ENCODE measurements at regions of chr3 and their contacts with region 1.

Region 1: GRCh38 chr3:32309654-32310242 is 71.3 kb downstream of the CMTM8 start:
- DNase-seq: no peak
- ATAC-seq: no peak
- H3K4me3 ChIP-seq: no peak overlapping the region
- H3K4me3 Mint-ChIP-seq: no peak overlapping the region
- H3K27ac ChIP-seq: no peak overlapping the region
- H3K27ac Mint-ChIP-seq: peak overlapping the region in 1 of 2 donors; percentile 11
- H3K4me1 ChIP-seq: peaks cover 3 to 22% of the 10 kb centered on the region in 2 experiments
- H3K4me1 Mint-ChIP-seq: peaks cover 50 to 60% (median 58%) of the 10 kb centered on the region in 3 donors
- H3K27me3 ChIP-seq: no peaks in the 10 kb centered on the region
- H3K27me3 Mint-ChIP-seq: no peaks in the 10 kb centered on the region

Region 2: DNA sequence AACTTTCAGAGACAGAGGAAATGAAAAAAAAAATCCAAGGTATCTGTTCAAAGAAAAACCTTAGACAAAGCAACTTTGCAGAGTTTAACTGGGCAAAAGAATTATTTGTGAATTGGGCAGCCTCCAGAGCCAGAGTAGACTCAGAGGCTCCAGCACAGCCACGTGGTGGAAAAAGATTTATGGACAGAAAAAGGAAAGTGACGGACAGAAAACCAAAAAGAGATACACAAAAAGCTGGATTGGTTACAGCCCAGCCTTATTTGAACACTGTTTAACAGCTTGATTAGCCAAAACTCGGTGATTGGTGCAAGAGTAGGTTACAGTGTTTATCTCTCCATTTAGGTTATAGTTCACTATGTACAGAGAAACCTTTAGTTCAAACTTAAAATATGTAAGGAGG is 227.0 kb before region 1 on chr3:
- CTCF ChIA-PET with region 1: no interaction called
- POLR2A ChIA-PET with region 1: interaction called in 1 of 2 experiments, 10 read pairs
- DNase-seq: no peak
- ATAC-seq: no peak
- H3K4me3 ChIP-seq: no peak overlapping the region
- H3K4me3 Mint-ChIP-seq: no peak overlapping the region
- H3K27ac ChIP-seq: no peak overlapping the region
- H3K27ac Mint-ChIP-seq: no peak overlapping the region
- H3K4me1 ChIP-seq: no peaks in the 10 kb centered on the region
- H3K4me1 Mint-ChIP-seq: no peaks in the 10 kb centered on the region
- H3K27me3 ChIP-seq: no peaks in the 10 kb centered on the region
- H3K27me3 Mint-ChIP-seq: peaks cover 0 to 6% of the 10 kb centered on the region in 2 donors

Region 3: GRCh38 chr3:32184187-32184730 is 125.5 kb before region 1 on chr3:
- CTCF ChIA-PET with region 1: interaction called in 1 of 2 experiments, 13 read pairs
- POLR2A ChIA-PET with region 1: no interaction called
- DNase-seq: no peak
- ATAC-seq: no peak
- H3K4me3 ChIP-seq: no peak overlapping the region
- H3K4me3 Mint-ChIP-seq: no peak overlapping the region
- H3K27ac ChIP-seq: no peak overlapping the region
- H3K27ac Mint-ChIP-seq: no peak overlapping the region
- H3K4me1 ChIP-seq: no peaks in the 10 kb centered on the region
- H3K4me1 Mint-ChIP-seq: no peaks in the 10 kb centered on the region
- H3K27me3 ChIP-seq: peaks cover 0 to 5% of the 10 kb centered on the region in 2 experiments
- H3K27me3 Mint-ChIP-seq: peaks cover 10 to 11% of the 10 kb centered on the region in 2 donors

Region 4: DNA sequence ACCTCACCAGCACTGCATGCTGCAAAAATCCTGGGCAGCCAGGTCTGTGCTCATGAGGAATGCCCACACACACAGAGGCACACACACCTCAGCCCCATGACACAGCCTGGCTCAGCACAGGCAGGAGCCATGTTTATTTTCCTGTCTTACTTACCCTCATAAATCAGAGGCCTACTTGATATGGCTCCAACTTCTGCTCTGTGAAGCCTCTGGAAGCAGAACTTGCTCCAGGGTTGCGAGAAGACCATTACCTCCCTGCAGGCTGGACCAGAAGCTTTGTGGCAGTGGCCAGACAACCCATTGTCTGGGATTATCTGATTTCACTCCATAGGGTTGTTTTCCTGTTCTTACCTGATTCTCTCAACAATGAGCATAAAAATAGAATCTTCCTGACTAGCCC is 115.1 kb before region 1 on chr3:
- CTCF ChIA-PET with region 1: no interaction called
- POLR2A ChIA-PET with region 1: no interaction called
- DNase-seq: no peak
- ATAC-seq: no peak
- H3K4me3 ChIP-seq: no peak overlapping the region
- H3K4me3 Mint-ChIP-seq: no peak overlapping the region
- H3K27ac ChIP-seq: no peak overlapping the region
- H3K27ac Mint-ChIP-seq: no peak overlapping the region
- H3K4me1 ChIP-seq: no peaks in the 10 kb centered on the region
- H3K4me1 Mint-ChIP-seq: no peaks in the 10 kb centered on the region
- H3K27me3 ChIP-seq: peaks cover 0 to 12% of the 10 kb centered on the region in 2 experiments
- H3K27me3 Mint-ChIP-seq: peaks cover 10% of the 10 kb centered on the region in 2 donors

Region 5: DNA sequence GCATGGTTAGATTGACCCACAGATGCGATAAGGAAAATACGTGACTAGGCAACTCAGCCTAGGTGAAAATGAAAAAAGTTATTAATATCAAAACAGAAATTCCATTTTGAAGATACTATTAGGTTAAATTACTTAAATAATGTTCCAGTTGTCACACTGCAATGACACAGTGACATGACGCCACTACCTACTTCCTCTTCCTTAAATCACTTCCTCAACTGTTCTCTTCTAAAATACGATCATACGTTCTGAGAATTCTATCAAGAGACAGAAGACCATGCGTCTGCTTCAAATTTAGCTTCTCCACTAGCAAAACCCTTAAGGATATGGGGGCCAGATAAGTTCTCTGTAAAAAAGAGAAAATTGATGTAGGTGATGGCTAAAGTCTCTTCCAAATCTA is 174.7 kb after region 1 on chr3:
- CTCF ChIA-PET with region 1: no interaction called
- POLR2A ChIA-PET with region 1: no interaction called
- DNase-seq: no peak
- ATAC-seq: no peak
- H3K4me3 ChIP-seq: no peak overlapping the region
- H3K4me3 Mint-ChIP-seq: peak overlapping the region in 1 of 3 donors; percentile 10
- H3K27ac ChIP-seq: no peak overlapping the region
- H3K27ac Mint-ChIP-seq: peak overlapping the region; percentile 11 to 69
- H3K4me1 ChIP-seq: peaks cover 0 to 6% of the 10 kb centered on the region in 2 experiments
- H3K4me1 Mint-ChIP-seq: peaks cover 20 to 37% (median 34%) of the 10 kb centered on the region in 3 donors
- H3K27me3 ChIP-seq: no peaks in the 10 kb centered on the region
- H3K27me3 Mint-ChIP-seq: no peaks in the 10 kb centered on the region

Measured in T-cell (primary cell).